CD4-positive, alpha-beta memory T cell (primary cell): ENCODE measurements at regions of chr11 and their contacts with region 1.

Region 1: DNA sequence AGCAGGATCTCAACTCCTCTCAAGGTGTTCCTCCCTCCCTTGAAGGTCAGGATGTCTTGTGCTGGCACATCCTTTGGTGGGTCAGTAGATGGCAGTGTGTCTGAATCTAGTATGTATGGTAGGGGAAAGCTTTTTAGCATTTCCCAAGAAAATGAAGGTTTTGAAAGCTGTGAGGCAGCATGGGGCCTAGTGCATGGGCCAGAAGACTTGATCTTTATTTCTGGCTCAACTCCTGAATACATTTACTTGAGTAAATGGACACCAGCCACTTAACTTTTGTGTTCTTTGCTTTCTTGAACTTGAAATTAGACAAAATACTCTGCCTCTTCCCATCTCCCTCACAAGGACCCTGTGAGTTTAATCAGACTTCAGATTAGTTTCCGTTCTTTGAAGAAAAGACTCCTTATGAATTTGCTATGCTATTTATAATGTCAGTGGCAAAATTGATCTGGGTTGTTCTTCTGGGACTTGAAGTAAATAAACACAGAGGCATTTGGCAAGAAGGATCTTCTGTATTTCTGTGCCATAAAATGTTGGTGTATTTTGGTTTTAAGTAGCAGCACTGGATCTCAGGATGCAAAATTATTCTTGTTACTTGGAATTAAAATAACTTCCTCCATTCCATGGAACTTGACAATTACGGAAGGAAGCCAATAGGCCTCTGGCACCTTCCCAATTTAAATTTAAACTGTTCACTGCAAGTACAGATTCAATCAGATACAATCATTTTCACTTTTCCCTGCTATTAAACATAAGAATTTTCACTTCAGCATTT is 288.8 kb downstream of the CASP12 start:
- DNase-seq: peak; percentile 37 to 62 (median 56)
- H3K4me3 ChIP-seq: no peak overlapping the region
- H3K4me3 Mint-ChIP-seq: peak overlapping the region in 2 of 8 donors; percentile 15 to 18
- H3K27ac ChIP-seq: no peak overlapping the region
- H3K27ac Mint-ChIP-seq: peak overlapping the region in 2 of 7 donors; percentile 37 to 54
- H3K4me1 ChIP-seq: peaks cover 12% of the 10 kb centered on the region
- H3K4me1 Mint-ChIP-seq: peaks cover 10 to 12% (median 11%) of the 10 kb centered on the region in 4 donors
- H3K27me3 ChIP-seq: no peaks in the 10 kb centered on the region
- H3K27me3 Mint-ChIP-seq: no peaks in the 10 kb centered on the region

Region 2: DNA sequence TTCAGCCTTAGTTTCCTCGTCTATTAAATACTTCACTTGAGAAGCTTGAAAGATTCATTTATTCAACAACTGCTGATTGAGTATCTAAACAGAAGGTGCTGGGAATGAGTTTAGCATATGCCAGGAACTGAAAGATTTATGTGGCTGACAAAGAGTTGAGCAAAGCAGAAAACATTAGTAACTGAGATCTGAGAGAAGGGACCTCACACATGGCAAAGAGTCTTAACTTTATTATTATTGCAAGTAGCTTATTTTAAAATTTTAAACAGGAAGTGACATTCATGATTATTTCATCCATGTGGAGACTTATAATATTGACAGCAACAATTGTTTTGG is 155.2 kb after region 1 on chr11:
- CTCF ChIA-PET with region 1: no interaction called
- POLR2A ChIA-PET with region 1: no interaction called
- intact Hi-C with region 1: no loop called
- DNase-seq: no peak
- H3K4me3 ChIP-seq: no peak overlapping the region
- H3K4me3 Mint-ChIP-seq: peak overlapping the region in 1 of 8 donors; percentile 2
- H3K27ac ChIP-seq: no peak overlapping the region
- H3K27ac Mint-ChIP-seq: peak overlapping the region in 3 of 7 donors; percentile 14 to 42 (median 32)
- H3K4me1 ChIP-seq: peaks cover 9% of the 10 kb centered on the region
- H3K4me1 Mint-ChIP-seq: peaks cover 10 to 20% (median 15%) of the 10 kb centered on the region in 4 donors
- H3K27me3 ChIP-seq: no peaks in the 10 kb centered on the region
- H3K27me3 Mint-ChIP-seq: peaks cover 0 to 2% of the 10 kb centered on the region in 2 donors

Region 3: GRCh38 chr11:104799251-104799650 is 189.8 kb after region 1 on chr11:
- CTCF ChIA-PET with region 1: interaction called, 4 read pairs
- POLR2A ChIA-PET with region 1: no interaction called
- intact Hi-C with region 1: loop called (anchors 2 kb)
- DNase-seq: peak in 3 of 5 donors; percentile 6 to 14 (median 9)
- H3K4me3 ChIP-seq: peak overlapping the region in 1 of 2 donors; percentile 16
- H3K4me3 Mint-ChIP-seq: peak overlapping the region; percentile 80 to 93 (median 84)
- H3K27ac ChIP-seq: no peak overlapping the region
- H3K27ac Mint-ChIP-seq: peak overlapping the region; percentile 71 to 92 (median 89)
- H3K4me1 ChIP-seq: peaks cover 29% of the 10 kb centered on the region
- H3K4me1 Mint-ChIP-seq: peaks cover 24 to 37% (median 33%) of the 10 kb centered on the region in 4 donors
- H3K27me3 ChIP-seq: no peaks in the 10 kb centered on the region
- H3K27me3 Mint-ChIP-seq: no peaks in the 10 kb centered on the region

Region 4: GRCh38 chr11:105000797-105001196 is 391.3 kb after region 1 on chr11:
- CTCF ChIA-PET with region 1: interaction called, 12 read pairs
- POLR2A ChIA-PET with region 1: no interaction called
- intact Hi-C with region 1: loop called (anchors 1 kb)
- DNase-seq: peak in 4 of 5 donors; percentile 49 to 59 (median 52)
- H3K4me3 ChIP-seq: no peak overlapping the region
- H3K4me3 Mint-ChIP-seq: peak overlapping the region in 2 of 8 donors; percentile 11 to 35
- H3K27ac ChIP-seq: no peak overlapping the region
- H3K27ac Mint-ChIP-seq: no peak overlapping the region
- H3K4me1 ChIP-seq: no peaks in the 10 kb centered on the region
- H3K4me1 Mint-ChIP-seq: peaks cover 4 to 7% (median 6%) of the 10 kb centered on the region in 4 donors
- H3K27me3 ChIP-seq: no peaks in the 10 kb centered on the region
- H3K27me3 Mint-ChIP-seq: no peaks in the 10 kb centered on the region

Region 5: GRCh38 chr11:105862736-105863367 is 1253.4 kb after region 1 on chr11:
- CTCF ChIA-PET with region 1: interaction called, 3 read pairs
- POLR2A ChIA-PET with region 1: no interaction called
- intact Hi-C with region 1: loop called (anchors 2 kb)
- DNase-seq: peak in 4 of 5 donors; percentile 3 to 33 (median 26)
- H3K4me3 ChIP-seq: no peak overlapping the region
- H3K4me3 Mint-ChIP-seq: no peak overlapping the region
- H3K27ac ChIP-seq: no peak overlapping the region
- H3K27ac Mint-ChIP-seq: no peak overlapping the region
- H3K4me1 ChIP-seq: no peaks in the 10 kb centered on the region
- H3K4me1 Mint-ChIP-seq: no peaks in the 10 kb centered on the region
- H3K27me3 ChIP-seq: no peaks in the 10 kb centered on the region
- H3K27me3 Mint-ChIP-seq: peaks cover 5 to 6% of the 10 kb centered on the region in 2 donors